Activated naive CD4-positive, alpha-beta T cell treated with anti-CD3 and anti-CD28 coated beads for 36 hours (primary cell): ENCODE measurements at regions of chr3 and their contacts with region 1.

Region 1: GRCh38 chr3:184981071-184981470 is 169.1 kb downstream of the VPS8 start:
- DNase-seq: no peak
- H3K4me3 Mint-ChIP-seq: no peak overlapping the region
- H3K27ac Mint-ChIP-seq: no peak overlapping the region
- H3K4me1 Mint-ChIP-seq: peaks cover 2% of the 10 kb centered on the region
- H3K27me3 Mint-ChIP-seq: no peaks in the 10 kb centered on the region

Region 2: DNA sequence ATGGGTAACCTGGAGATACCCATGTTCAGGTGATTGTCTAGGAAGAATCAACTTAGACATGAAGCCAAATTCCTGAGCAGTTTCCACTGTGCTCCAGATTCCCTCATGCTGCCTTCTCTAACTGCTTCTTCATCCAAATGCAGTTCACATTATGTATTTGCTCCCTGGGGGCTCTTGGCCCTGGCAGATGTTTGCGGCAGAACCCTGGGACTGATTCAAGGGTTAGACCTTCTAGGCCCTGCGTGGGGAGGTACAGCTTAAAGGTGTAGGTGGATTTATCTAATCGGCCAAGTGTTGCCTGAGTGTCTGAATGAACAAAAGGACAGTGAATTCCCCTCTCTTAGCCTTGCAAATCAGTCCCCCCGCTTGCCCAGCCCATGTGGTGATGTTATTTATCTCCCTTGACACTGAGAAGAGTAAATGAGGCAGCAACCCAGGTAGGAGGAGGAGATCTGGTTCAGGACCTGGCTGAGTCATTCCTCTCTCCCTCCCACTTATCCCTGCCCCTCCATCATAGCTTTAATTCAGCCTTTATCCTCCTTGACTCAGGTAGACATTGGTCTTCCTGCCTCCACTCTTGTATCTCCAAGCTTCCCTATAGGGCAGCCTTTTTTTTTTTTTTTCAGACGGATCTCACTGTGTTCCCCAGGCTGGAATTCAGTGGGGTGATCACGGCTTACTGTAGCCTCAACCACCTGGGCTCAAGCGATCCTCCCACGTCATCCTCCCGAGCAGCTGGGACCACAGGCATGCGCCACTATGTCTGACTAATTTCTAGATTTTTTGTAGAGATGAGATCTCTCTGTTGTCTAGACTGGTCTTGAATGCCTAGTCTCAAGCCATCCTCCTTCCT is 324.0 kb before region 1 on chr3:
- CTCF ChIA-PET with region 1: no interaction called
- intact Hi-C with region 1: no loop called
- DNase-seq: peak; percentile 10
- H3K4me3 Mint-ChIP-seq: no peak overlapping the region
- H3K27ac Mint-ChIP-seq: no peak overlapping the region
- H3K4me1 Mint-ChIP-seq: no peaks in the 10 kb centered on the region
- H3K27me3 Mint-ChIP-seq: no peaks in the 10 kb centered on the region

Region 3: DNA sequence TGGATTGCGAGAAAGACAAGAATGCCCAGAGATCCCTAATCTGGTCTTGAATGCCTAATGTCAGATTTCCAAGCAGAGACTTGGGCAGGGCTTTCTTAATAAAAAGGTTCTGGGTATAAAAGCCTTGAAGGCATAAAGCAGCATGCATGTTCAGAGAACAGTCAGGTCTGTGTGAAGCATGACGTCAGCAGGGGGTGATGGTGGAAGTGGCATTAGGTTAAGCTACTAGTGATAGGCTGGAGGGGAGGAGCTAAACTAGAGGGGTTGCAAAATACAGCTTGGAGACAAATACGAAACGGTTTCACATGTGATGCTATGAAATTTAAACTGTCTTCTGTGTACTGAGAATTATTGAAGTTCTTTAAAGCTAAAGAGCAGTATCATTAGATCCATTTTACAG is 43.5 kb before region 1 on chr3:
- CTCF ChIA-PET with region 1: no interaction called
- intact Hi-C with region 1: no loop called
- DNase-seq: no peak
- H3K4me3 Mint-ChIP-seq: no peak overlapping the region
- H3K27ac Mint-ChIP-seq: no peak overlapping the region
- H3K4me1 Mint-ChIP-seq: no peaks in the 10 kb centered on the region
- H3K27me3 Mint-ChIP-seq: no peaks in the 10 kb centered on the region

Region 4: GRCh38 chr3:184993394-184993793 is 12.3 kb after region 1 on chr3:
- CTCF ChIA-PET with region 1: interaction called, 10 read pairs
- intact Hi-C with region 1: no loop called
- DNase-seq: no peak
- H3K4me3 Mint-ChIP-seq: no peak overlapping the region
- H3K27ac Mint-ChIP-seq: no peak overlapping the region
- H3K4me1 Mint-ChIP-seq: no peaks in the 10 kb centered on the region
- H3K27me3 Mint-ChIP-seq: no peaks in the 10 kb centered on the region